ENCODE measurements at regions of chr1 and their contacts with region 1.

Region 1: GRCh38 chr1:54950369-54951163 is 29.9 kb upstream of the TMEM61 start:
- DNase-seq: peak in 1 of 2 donors; percentile 88
- H3K4me3 ChIP-seq: peak overlapping the region in 1 of 2 donors; percentile 45
- H3K27ac ChIP-seq: peak overlapping the region; percentile 61 to 80
- H3K4me1 ChIP-seq: peaks cover 5 to 19% of the 10 kb centered on the region in 2 donors
- H3K27me3 ChIP-seq: no peaks in the 10 kb centered on the region
- CTCF ChIP-seq: peak; percentile 78 to 82 (median 80)

Region 2: DNA sequence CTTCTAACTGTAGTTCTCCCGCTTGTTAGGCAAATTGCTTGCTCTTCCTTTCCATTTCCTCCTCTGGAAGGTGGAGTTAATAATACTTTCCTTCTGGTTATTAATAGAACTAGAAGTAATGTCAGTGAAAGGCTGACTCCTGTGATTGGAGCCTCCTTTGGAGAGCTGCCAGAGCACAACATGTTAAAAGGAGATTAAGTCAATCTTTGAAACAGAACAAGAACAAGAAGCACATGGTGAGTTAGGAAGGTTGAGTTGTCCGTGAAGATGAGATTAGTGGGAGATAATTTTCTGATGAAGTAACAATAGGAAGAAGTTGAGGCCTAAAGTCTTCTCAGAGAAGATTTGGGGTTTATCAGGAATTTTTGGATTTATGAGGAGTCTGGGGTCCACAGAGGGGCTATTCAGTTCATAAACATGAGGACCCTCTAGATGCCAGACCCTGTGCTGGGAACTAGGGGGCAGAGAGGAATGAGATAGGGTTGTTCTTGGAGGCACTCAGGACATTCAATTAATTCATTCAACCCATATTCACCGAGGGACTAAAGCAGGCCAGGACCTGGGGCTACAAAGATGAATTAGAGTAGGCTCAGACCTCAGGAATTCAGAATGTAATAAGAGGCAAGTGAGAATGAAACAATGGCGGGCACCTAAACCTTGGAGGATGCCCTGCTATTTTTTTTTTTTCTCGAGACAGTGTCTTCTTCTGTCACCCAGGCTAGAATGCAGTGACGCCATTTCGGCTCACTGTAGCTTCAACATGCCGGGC is 22.9 kb before region 1 on chr1:
- intact Hi-C with region 1: no loop called
- DNase-seq: no peak
- H3K4me3 ChIP-seq: no peak overlapping the region
- H3K27ac ChIP-seq: no peak overlapping the region
- H3K4me1 ChIP-seq: no peaks in the 10 kb centered on the region
- H3K27me3 ChIP-seq: no peaks in the 10 kb centered on the region
- CTCF ChIP-seq: no peak

Region 3: GRCh38 chr1:54973205-54973921 is 22.8 kb after region 1 on chr1:
- intact Hi-C with region 1: loop called (anchors 1 kb)
- DNase-seq: peak in 1 of 2 donors; percentile 84
- H3K4me3 ChIP-seq: peak overlapping the region in 1 of 2 donors; percentile 1
- H3K27ac ChIP-seq: peak overlapping the region; percentile 77 to 83
- H3K4me1 ChIP-seq: peaks cover 0 to 15% of the 10 kb centered on the region in 2 donors
- H3K27me3 ChIP-seq: no peaks in the 10 kb centered on the region
- CTCF ChIP-seq: peak in 2 of 3 experiments; percentile 42 to 47

Region 4: DNA sequence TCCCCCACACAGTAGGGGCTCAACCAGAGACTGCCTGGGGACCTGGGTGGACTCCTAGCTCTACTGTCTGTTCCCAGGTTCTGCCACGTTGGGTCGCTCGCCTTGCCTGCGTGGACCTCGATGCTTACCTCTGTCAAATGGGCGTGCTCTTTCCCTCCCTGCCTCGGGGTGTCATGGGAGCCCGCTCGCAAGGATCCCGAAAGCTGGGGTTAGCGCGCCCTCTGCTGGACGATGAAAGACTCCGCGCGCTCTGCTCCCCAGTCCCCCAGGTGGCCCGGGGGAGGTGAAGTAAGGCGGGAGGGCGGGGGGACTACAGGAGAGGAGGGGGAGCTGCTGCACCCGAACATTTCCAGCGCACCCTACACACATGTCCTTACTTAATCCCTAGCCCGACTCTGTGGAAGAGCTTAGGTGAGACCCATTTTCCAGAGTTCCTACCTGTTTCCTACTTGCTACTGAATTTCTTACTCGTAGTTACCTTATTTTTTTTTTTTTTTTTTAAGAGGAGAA is 45.8 kb after region 1 on chr1:
- intact Hi-C with region 1: loop called (anchors 1 kb)
- DNase-seq: peak in 1 of 2 donors; percentile 76
- H3K4me3 ChIP-seq: peak overlapping the region; percentile 0 to 16
- H3K27ac ChIP-seq: no peak overlapping the region
- H3K4me1 ChIP-seq: peaks cover 0 to 7% of the 10 kb centered on the region in 2 donors
- H3K27me3 ChIP-seq: no peaks in the 10 kb centered on the region
- CTCF ChIP-seq: peak; percentile 77 to 92 (median 90)

Measured in ascending aorta (tissue), 2 donors.